Tibial artery (tissue), 4 donors: ENCODE measurements at regions of chr15 and their contacts with region 1.

Region 1: GRCh38 chr15:86942285-86942684 is 862.6 kb downstream of the AGBL1 start:
- DNase-seq: no peak
- H3K4me3 ChIP-seq: no peak overlapping the region
- H3K27ac ChIP-seq: no peak overlapping the region
- H3K4me1 ChIP-seq: no peaks in the 10 kb centered on the region
- H3K27me3 ChIP-seq: no peaks in the 10 kb centered on the region
- CTCF ChIP-seq: no peak

Region 2: DNA sequence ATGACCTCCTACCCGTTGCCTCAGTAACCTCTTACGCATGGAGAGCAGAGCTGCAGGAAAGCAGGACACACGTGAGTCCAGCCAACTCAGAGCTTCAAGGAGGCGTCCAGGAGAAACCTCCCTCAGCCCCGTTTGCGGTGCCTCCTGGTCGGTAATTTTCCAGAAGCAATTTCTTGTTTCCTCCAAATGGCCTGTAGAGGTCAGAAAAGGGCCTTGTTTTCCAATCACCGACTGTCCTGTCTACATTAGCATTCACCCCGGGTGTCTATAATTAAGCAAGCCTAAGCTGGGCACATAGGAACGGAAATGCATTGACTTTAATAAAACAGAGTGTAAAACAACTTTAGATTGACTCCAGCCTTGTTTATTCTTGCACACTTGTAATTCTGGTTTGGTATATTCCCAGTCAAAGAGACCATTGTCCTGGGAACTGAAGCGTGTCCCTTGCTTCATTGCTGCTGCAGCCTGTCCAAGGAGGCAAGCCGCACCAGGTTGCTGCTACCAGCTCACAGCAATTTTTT is 26.4 kb before region 1 on chr15:
- intact Hi-C with region 1: loop called (anchors 1 kb)
- DNase-seq: no peak
- H3K4me3 ChIP-seq: no peak overlapping the region
- H3K27ac ChIP-seq: no peak overlapping the region
- H3K4me1 ChIP-seq: no peaks in the 10 kb centered on the region
- H3K27me3 ChIP-seq: peaks cover 0 to 6% of the 10 kb centered on the region in 2 donors
- CTCF ChIP-seq: peak; percentile 32 to 41